Right ventricle myocardium inferior (tissue), 1 donor: ENCODE measurements at regions of chr12 and their contacts with region 1.

Region 1: DNA sequence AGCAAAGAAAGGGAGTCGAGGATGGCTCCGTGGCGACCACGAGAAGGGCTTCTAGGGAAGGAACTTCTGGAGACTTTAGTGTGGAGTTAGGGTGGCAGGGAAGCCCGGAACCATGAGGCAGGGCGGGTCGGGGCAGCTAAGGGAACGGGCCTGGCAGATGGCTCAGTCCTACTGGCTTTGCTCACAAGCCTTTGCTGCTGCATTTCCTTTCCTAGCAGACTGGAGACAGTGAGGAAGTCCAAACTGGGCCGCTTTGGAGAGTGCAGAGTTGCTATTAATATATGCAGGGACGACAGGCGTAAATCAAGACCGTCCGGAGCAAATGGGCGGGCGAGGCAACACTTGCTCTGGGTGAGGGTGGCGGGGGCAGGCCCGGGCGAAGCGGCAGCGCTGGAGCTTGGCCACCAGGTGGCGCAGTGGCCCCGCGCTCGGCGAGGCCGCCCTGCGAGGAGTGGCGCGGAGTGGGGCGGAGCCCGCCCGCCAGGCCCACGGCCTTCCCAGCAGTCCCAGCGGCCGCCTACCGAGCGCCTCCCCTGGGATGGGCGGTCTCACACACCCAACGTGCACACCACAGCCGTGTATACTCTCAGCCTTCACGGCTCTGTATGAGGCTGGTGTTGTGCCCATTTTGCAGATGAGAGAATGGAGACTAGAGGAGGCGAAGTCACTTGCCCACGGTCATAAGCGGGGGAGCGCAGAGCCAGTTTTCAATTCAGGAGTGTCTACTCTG is 24.4 kb upstream of the LRTM2 start:
- DNase-seq: peak; percentile 97
- ATAC-seq: peak; percentile 96

Region 2: DNA sequence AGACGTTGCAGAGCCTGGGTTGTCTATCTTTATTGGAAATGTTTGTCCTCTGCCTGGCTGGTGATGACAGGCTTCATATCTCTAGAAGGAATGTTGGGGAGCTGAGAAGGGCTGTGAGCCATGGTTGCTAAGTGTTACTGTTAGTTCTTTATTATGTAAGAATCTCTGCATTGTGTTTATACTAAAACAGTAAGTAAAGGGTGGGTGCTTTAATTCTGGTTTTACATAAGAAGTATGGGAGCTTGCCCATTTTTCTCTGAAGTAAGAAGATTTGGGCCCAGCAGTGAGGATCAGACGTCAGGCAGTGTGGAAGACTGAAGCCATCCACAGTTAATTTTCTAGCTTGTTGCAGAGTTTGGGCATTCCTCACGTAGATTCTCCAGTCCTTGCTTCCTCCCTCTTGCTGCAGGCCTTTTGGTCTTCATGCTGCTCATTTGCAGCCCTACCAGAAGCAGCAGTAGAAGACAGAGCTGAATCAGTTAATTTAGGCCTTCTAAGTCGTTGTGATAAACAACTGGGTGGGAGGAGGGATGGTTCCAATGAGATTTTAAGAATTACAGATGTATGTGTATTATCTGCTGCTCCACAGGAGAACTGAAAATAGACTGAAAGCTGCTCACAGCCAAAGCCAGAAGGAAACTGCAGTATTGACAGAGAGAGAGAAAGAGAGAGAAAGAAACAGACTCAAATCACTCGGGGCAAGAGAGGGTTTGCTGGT is 145.5 kb before region 1 on chr12:
- intact Hi-C with region 1: loop called (anchors 1 kb)
- DNase-seq: no peak
- ATAC-seq: peak; percentile 87

Region 3: DNA sequence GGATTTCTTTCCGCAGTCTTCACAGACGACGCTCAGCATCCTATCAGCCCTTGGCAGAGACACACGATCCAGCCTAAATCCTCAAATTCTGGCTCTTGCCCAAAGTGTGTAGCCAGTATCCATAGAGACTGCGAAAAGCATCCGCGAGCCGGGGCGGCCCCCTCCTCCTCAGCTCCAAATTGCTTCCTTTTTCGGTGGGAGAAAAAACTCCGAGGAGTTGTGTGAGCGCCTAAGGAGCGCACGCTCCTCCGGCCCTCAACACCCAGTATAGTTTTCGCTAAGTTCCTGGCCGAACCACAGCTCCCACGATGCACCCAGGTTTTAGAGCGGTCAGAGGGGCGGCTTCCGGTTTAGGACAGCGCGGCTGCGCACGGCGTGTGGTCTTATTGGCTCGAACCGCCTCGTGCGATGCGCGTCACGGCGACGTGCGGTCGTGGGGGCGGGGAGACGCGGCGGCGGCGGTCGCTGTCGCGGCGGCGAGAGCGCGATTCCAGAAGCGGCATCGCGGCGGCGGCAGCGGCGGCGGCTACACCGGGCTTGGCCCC is 105.3 kb before region 1 on chr12 and contains the start of gene ADIPOR2:
- intact Hi-C with region 1: no loop called
- DNase-seq: peak; percentile 98
- ATAC-seq: peak; percentile 99
- total RNA-seq, gene ADIPOR2: 38.4 TPM

Region 4: DNA sequence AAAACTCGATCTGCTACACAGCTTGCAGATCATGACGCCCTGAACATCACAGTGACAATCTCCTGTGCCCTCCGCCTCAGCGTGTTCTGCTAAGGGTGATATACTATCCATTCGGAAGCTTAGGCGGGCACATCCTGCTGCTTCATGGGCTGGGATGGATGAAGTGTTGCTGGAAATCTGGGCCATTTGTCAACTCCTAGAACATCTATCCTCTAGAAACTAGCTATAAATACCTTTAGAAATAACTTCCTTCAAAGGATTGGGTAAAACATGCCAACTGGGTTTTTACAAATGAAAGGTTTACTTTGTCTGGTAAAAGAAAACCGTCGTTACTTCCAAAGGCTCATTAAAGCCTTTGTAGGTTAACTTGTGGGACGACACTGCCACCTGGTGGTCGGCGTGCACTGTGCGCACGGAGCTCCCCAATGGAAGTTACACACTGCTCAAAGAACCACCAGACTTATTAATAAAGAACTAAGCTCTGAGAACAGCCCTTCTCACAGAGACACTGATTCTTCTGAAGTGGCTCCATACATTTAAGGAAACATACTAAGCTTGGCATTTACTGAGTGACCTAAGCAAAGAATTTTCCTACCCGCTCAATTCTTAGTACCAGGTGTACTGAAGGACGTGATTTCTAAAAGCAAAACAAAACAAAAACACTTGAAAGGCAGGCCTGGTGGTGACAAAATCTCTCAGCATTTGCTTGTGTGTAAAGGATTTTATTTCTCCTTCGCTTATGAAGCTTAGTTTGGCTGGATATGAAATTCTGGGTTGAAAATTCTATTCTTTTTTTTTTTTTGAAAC is 144.1 kb after region 1 on chr12:
- intact Hi-C with region 1: loop called (anchors 1 kb)
- DNase-seq: peak; percentile 93
- ATAC-seq: peak; percentile 86

Region 5: GRCh38 chr12:2284857-2285256 is 488.9 kb after region 1 on chr12:
- intact Hi-C with region 1: loop called (anchors 10 kb)
- DNase-seq: peak; percentile 90
- ATAC-seq: peak; percentile 89

Region 6: DNA sequence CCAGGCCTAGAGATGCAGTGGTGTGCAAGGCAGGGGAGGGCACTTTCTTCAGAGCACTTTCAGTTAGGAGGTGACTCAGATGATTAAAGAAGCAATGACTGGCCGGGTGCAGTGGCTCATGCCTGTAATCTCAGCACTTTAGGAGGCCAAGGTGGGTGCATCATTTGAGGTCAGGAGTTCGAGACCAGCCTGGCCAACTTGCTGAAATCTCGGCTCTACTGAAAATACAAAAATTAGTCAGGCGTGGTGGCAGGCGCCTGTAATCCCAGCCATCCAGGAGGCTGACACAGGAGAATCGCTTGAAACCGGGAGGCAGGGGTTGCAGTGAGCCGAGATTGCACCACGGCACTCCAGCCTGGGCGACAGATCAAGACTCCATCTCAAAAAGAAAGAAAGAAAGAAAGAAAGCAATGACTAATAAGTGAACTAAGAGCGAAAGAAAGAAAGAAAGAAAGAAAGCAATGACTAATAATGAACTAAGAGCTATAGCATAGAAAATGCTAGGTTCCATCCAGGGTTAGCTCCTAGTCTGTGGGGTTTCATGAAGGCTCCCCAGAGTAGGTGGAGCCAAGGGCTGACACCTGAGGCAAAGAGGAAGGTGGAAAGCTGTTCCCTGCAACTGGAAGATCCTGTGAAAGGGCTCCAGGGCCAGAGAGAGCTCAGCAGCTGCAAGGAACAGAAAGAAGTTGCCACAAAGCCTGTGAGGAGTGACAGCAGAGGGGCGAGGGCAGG is 591.3 kb after region 1 on chr12:
- intact Hi-C with region 1: loop called (anchors 10 kb)
- DNase-seq: no peak
- ATAC-seq: no peak

Region 7: DNA sequence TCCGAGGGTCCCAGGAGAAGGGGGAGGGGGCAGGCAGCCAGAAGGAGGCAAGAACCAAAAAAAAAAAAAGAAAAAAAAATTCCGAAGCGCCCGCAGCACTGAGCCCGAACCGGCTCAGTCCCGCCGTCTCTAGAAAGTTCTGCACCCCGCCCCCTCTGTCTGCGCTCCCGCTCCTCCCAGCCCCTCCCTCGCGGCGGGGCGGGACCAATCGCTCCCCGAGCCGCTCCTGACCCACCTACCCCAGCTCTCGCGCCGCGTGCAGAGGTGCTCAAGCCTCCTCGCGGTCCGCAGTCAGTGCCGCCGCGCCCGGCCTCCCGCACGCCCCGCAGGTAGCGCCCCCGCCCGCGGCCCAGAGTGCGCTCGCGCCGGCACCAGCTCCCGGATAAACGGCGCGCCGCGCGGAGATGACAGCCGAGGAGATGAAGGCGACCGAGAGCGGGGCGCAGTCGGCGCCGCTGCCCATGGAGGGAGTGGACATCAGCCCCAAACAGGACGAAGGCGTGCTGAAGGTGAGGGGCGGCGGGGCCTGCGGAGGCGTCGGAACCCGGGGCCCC is 998.9 kb after region 1 on chr12 and contains the start of gene FKBP4:
- intact Hi-C with region 1: loop called (anchors 10 kb)
- DNase-seq: peak; percentile 95
- ATAC-seq: peak; percentile 94
- total RNA-seq, gene FKBP4: 64.1 TPM